ENCODE measurements at regions of chr6 and their contacts with region 1.

Region 1: GRCh38 chr6:137271245-137272183 is 52.3 kb upstream of the IFNGR1 start:
- DNase-seq: no peak
- H3K4me3 ChIP-seq: no peak overlapping the region
- H3K27ac ChIP-seq: no peak overlapping the region
- H3K4me1 ChIP-seq: no peaks in the 10 kb centered on the region
- H3K27me3 ChIP-seq: no peaks in the 10 kb centered on the region
- CTCF ChIP-seq: peak; percentile 95

Region 2: GRCh38 chr6:136967876-136968752 is 303.4 kb before region 1 on chr6:
- intact Hi-C with region 1: no loop called
- DNase-seq: peak; percentile 71
- H3K4me3 ChIP-seq: no peak overlapping the region
- H3K27ac ChIP-seq: peak overlapping the region; percentile 86
- H3K4me1 ChIP-seq: peaks cover 22% of the 10 kb centered on the region
- H3K27me3 ChIP-seq: peaks cover 13% of the 10 kb centered on the region
- CTCF ChIP-seq: peak; percentile 70

Region 3: DNA sequence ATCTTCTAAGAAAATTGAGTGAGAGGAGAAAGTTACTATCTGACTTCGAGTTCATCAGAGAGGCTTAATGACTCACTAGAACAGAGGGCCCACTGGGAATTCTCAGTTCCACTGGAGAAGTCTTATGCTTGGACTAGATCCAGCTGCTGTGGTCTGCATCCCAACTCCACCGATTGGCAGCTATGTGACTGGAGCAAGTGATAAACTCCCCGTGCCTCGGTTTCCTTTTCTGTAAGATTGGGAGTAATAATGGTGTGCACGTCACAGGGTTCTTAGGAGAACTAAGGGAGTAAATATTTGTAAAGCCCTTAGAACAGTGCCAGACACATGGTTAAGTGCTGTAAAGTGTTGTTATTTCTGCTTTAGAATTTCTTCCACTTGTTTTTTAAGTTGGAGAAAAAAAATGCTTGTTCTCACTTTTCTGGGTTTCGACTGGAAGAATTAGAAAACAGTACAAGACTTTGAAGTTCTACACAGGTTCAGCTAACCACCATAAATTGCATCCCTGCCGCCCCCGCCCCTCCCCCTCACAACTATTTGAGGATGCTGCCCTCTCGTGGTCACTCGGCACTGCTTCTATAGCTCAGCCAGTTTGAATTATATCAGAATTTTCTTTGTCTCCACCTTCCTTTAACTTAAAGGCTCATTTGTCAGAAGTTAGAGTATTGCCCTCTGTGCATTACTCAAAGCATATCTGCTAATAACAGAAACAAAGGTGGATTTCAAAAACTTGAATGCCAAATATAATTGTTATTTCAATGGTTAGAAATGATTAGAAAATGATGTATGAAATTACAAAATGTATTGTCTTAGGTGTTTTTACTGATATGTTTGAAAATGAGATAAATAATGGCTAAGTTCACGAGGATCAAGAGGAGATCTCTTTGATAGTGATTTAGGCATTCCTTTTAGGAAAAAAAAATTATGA is 42.7 kb after region 1 on chr6:
- intact Hi-C with region 1: loop called (anchors 2 kb)
- DNase-seq: peak; percentile 75
- H3K4me3 ChIP-seq: peak overlapping the region; percentile 49
- H3K27ac ChIP-seq: peak overlapping the region; percentile 33
- H3K4me1 ChIP-seq: peaks cover 13% of the 10 kb centered on the region
- H3K27me3 ChIP-seq: no peaks in the 10 kb centered on the region
- CTCF ChIP-seq: peak; percentile 84

Region 4: DNA sequence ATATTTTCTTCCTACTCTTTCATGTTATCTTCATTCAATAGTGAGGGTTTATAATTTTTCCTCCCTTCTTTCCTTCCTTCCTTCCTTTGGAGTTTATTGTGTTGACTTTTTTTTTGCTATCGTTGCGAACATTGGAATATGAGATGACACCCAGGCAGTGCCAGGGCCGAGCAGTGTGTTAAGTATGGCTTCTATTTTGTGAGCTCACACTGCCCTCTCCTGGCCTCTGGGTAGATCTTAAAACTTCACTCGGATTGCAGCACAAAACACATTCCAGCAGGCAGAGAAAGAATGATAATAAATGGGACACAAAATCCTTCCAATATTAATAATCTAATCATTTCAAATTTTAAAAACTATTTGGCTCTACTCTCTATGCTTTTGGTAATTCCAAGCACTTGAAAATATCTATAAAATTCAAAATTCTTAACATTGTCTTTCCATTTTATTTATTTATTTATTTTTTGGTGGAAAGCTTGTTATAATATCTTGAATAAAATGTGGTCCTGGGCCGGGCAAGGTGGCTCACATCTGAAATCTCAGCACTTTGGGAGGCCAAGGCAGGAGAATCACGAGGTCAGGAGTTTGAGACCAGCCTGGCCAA is 370.1 kb after region 1 on chr6:
- intact Hi-C with region 1: loop called (anchors 5 kb)
- DNase-seq: peak; percentile 45
- H3K4me3 ChIP-seq: no peak overlapping the region
- H3K27ac ChIP-seq: no peak overlapping the region
- H3K4me1 ChIP-seq: peaks cover 6% of the 10 kb centered on the region
- H3K27me3 ChIP-seq: no peaks in the 10 kb centered on the region
- CTCF ChIP-seq: peak; percentile 77